ENCODE measurements at regions of chr3 and their contacts with region 1.

Region 1: GRCh38 chr3:142828703-142829305 is 60.1 kb downstream of the PCOLCE2 start:
- DNase-seq: peak; percentile 90
- ATAC-seq: peak; percentile 100
- H3K4me3 Mint-ChIP-seq: no peak overlapping the region
- H3K27ac Mint-ChIP-seq: no peak overlapping the region
- H3K4me1 Mint-ChIP-seq: no peaks in the 10 kb centered on the region
- H3K27me3 Mint-ChIP-seq: no peaks in the 10 kb centered on the region
- CTCF ChIP-seq: peak; percentile 73

Region 2: DNA sequence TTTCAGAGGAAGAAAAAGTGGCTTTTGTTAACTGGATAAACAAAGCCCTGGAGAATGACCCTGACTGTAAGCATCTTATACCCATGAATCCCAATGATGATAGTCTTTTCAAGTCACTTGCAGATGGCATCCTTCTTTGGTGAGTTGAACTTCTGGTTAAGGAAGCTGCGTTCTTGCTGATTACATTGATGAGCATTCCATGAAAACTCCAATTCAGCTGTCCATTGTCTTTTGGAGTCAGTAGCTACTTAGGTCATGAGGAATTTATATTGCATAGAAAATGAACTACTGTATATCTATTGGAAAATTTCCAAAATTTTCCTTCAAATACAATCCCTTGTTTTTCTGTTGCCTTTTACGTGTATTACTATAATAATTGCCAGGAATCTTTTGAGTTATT is 152.7 kb before region 1 on chr3:
- CTCF ChIA-PET with region 1: no interaction called
- POLR2A ChIA-PET with region 1: no interaction called
- intact Hi-C with region 1: no loop called
- DNase-seq: no peak
- ATAC-seq: no peak
- H3K4me3 Mint-ChIP-seq: no peak overlapping the region
- H3K27ac Mint-ChIP-seq: no peak overlapping the region
- H3K4me1 Mint-ChIP-seq: no peaks in the 10 kb centered on the region
- H3K27me3 Mint-ChIP-seq: no peaks in the 10 kb centered on the region
- CTCF ChIP-seq: no peak

Region 3: GRCh38 chr3:142787719-142788118 is 41.1 kb before region 1 on chr3:
- CTCF ChIA-PET with region 1: interaction called, 16 read pairs
- POLR2A ChIA-PET with region 1: no interaction called
- intact Hi-C with region 1: no loop called
- DNase-seq: no peak
- ATAC-seq: no peak
- H3K4me3 Mint-ChIP-seq: no peak overlapping the region
- H3K27ac Mint-ChIP-seq: no peak overlapping the region
- H3K4me1 Mint-ChIP-seq: no peaks in the 10 kb centered on the region
- H3K27me3 Mint-ChIP-seq: no peaks in the 10 kb centered on the region
- CTCF ChIP-seq: no peak

Region 4: GRCh38 chr3:142839831-142840230 is 11.0 kb after region 1 on chr3:
- CTCF ChIA-PET with region 1: interaction called, 12 read pairs
- POLR2A ChIA-PET with region 1: no interaction called
- intact Hi-C with region 1: no loop called
- DNase-seq: no peak
- ATAC-seq: no peak
- H3K4me3 Mint-ChIP-seq: no peak overlapping the region
- H3K27ac Mint-ChIP-seq: no peak overlapping the region
- H3K4me1 Mint-ChIP-seq: no peaks in the 10 kb centered on the region
- H3K27me3 Mint-ChIP-seq: peaks cover 1% of the 10 kb centered on the region
- CTCF ChIP-seq: no peak

Region 5: DNA sequence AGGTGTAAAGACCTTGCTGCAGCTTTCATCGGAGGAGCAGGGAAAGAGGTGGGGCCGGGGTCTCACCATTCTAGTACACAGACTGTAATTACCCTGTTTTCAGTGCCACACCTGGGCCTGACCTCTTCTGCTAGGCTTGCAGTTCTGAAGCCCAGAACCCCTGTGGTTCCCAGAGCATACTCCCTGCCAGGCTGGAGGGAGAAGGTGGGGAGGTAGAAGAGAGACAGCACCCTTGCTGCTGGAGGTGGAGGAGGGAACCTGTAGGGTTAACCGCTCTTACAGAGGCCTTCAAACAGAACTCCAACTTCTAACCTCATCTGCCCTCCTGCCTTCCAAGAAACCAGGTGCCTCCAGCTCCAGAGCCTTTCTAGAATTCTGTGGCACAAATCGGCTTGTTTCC is 33.1 kb after region 1 on chr3:
- CTCF ChIA-PET with region 1: interaction called, 12 read pairs
- POLR2A ChIA-PET with region 1: no interaction called
- intact Hi-C with region 1: no loop called
- DNase-seq: no peak
- ATAC-seq: no peak
- H3K4me3 Mint-ChIP-seq: no peak overlapping the region
- H3K27ac Mint-ChIP-seq: no peak overlapping the region
- H3K4me1 Mint-ChIP-seq: peaks cover 8% of the 10 kb centered on the region
- H3K27me3 Mint-ChIP-seq: peaks cover 16% of the 10 kb centered on the region
- CTCF ChIP-seq: no peak

Region 6: DNA sequence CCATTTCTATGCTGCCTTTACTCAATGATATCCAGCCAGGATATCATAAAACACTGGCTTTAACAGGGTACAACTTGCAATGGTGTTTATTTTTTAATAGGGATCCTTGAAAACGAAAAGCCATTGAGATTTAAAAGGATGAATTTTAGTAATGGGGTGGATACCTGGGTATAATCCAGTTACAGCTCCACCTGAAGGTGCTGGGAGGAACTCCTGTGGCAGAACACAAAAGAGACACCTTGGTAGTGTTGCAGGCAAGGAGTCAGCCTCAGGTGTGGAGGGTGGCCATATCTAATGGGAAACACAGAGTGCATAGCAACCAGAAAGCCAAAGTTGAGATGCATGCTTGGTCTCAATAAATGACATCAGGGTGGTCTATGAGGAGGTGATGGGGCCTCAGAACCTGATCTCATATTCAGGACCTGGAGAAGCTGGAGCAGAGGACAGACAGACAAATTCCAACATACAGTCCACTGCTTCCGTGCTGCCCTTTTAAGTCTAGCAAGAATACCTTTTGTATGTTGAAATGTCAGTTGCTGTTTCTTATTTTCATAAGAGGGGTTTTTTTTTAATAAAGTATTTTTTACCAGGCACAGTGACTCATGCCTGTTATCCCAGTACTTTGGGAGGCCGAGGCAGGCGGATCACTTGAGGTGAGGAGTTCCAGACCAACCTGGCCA is 146.7 kb after region 1 on chr3:
- CTCF ChIA-PET with region 1: interaction called, 10 read pairs
- POLR2A ChIA-PET with region 1: no interaction called
- intact Hi-C with region 1: no loop called
- DNase-seq: no peak
- ATAC-seq: no peak
- H3K4me3 Mint-ChIP-seq: no peak overlapping the region
- H3K27ac Mint-ChIP-seq: no peak overlapping the region
- H3K4me1 Mint-ChIP-seq: no peaks in the 10 kb centered on the region
- H3K27me3 Mint-ChIP-seq: peaks cover 10% of the 10 kb centered on the region
- CTCF ChIP-seq: no peak

Region 7: DNA sequence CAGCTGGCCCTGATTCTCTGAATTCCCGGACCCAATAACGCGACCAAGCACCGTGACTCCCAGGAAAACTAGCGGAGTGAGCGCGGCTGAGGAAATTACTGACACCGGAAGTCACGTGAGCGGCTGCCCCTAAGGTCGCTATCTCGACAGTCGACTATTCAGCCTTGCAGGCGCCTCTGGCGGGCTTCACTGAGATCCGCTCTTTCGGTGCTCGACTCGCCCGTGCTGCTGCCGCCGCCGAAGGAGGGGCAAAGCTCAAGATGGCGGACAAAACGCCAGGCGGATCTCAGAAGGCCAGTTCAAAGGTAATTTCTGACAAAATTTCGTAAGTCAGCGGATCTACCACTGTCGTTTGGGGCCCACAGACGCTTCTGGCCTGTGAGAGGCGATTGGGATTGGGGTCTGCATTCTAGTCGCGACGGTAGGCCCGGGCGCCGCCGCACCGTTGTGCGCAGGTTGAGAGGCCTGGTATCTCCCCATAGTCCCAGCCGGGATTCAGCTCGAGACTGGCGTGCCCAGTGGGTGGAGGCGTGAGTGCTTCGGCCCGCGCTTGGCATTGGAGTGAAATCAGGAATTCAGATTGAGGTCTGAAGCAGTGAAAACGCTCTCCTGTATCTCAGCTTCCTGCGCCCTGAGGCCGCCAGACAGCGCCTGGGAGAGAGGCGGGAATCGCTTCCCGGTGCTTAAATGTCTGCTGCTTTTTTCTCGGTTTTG is 172.7 kb after region 1 on chr3 and contains the start of gene U2SURP:
- CTCF ChIA-PET with region 1: interaction called, 12 read pairs
- POLR2A ChIA-PET with region 1: interaction called, 4 read pairs
- intact Hi-C with region 1: no loop called
- DNase-seq: peak; percentile 96
- ATAC-seq: peak; percentile 90
- H3K4me3 Mint-ChIP-seq: peak within 1 kb of the TSS; percentile 92
- H3K27ac Mint-ChIP-seq: peak within 1 kb of the TSS; percentile 100
- H3K4me1 Mint-ChIP-seq: peaks cover 29% of the 10 kb centered on the region
- H3K27me3 Mint-ChIP-seq: peaks cover 4% of the 10 kb centered on the region
- CTCF ChIP-seq: no peak
- total RNA-seq, gene U2SURP: 160 to 174 TPM

Region 8: DNA sequence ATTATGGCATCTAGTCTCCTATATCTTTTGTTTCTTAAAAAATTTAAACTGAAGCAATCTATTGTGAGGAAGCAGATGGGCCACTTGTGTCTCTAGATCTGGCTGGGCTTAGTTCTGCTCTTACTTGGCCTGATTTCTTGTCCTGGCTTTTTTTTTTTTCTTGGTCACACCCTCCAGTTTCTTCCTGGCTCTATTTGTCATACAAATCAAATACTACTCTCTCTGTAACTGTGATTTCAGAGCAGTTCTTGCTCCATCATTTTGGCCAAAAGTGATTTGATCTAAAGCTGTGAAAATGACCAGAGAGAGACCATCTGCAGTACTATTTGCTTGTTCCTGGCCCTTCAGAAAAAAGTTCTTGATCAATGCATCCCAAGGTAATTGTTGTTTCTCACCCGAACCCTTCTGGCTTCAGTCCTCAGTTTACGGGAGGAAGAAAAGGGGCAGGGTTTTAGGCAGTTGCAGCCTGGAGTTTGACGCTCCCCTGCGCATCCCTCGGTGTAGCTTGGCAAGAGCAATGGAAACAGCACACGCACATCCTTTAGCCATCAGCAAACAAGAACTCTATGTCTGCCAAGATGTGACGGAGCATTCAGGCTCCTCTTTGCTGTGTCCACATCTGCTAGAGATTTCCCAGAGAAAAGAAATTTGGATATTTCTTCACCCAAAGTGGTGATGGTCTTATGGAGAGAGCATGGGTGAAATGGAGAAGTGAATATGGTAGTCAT is 322.4 kb after region 1 on chr3:
- CTCF ChIA-PET with region 1: no interaction called
- POLR2A ChIA-PET with region 1: no interaction called
- intact Hi-C with region 1: no loop called
- DNase-seq: no peak
- ATAC-seq: no peak
- H3K4me3 Mint-ChIP-seq: no peak overlapping the region
- H3K27ac Mint-ChIP-seq: no peak overlapping the region
- H3K4me1 Mint-ChIP-seq: peaks cover 19% of the 10 kb centered on the region
- H3K27me3 Mint-ChIP-seq: no peaks in the 10 kb centered on the region
- CTCF ChIP-seq: no peak